Mammary epithelial cell (primary cell): ENCODE measurements at regions of chr17 and their contacts with region 1.

Region 1: DNA sequence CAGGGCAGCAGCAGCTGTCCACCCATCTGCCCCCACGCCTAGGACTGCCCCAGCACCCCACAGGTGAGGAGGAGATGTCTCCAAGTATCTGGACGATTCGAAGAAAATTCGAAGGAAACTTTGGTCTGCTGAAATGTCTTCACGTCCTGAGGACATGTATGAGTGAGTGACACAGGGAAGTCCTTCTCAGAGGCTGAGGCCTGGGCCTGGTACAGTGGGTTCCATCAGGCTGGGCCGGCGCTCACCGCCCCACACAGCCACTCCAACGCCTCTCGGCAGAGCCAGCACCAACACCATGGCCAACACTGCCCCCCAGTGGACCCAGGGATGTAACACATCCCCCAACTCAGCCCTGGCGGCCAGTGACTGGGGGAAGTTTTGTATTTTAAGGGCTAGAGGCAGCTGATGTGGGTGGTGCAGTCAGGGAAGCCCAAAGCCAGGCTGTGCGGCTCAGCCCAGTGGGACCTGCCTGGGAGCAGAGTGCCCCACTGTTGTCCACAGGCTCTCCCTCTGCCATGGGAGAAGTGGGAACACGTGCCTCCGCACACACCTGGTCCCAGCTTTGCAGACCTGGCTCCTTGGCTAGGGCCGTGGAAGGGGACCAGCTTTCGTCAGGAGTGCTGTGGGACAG is 55.8 kb upstream of the FASN start:
- DNase-seq: peak; percentile 64
- H3K4me3 ChIP-seq: no peak overlapping the region
- H3K27ac ChIP-seq: no peak overlapping the region
- H3K4me1 ChIP-seq: no peaks in the 10 kb centered on the region
- H3K27me3 ChIP-seq: no peaks in the 10 kb centered on the region
- CTCF ChIP-seq: peak; percentile 86 to 93

Region 2: GRCh38 chr17:81911277-81911961 is 242.4 kb before region 1 on chr17 and contains the start of gene PCYT2:
- CTCF ChIA-PET with region 1: no interaction called
- dilution Hi-C with region 1: no loop called
- in situ Hi-C with region 1: no loop called
- intact Hi-C with region 1: no loop called
- DNase-seq: peak; percentile 85
- H3K4me3 ChIP-seq: peak within 1 kb of the TSS; percentile 81 to 92 (median 83)
- H3K27ac ChIP-seq: peak within 1 kb of the TSS; percentile 19
- H3K4me1 ChIP-seq: peaks cover 12% of the 10 kb centered on the region
- H3K27me3 ChIP-seq: no peaks in the 10 kb centered on the region
- CTCF ChIP-seq: peak in 1 of 2 donors; percentile 2
- total RNA-seq, gene PCYT2: 23.5 to 48.7 TPM

Region 3: DNA sequence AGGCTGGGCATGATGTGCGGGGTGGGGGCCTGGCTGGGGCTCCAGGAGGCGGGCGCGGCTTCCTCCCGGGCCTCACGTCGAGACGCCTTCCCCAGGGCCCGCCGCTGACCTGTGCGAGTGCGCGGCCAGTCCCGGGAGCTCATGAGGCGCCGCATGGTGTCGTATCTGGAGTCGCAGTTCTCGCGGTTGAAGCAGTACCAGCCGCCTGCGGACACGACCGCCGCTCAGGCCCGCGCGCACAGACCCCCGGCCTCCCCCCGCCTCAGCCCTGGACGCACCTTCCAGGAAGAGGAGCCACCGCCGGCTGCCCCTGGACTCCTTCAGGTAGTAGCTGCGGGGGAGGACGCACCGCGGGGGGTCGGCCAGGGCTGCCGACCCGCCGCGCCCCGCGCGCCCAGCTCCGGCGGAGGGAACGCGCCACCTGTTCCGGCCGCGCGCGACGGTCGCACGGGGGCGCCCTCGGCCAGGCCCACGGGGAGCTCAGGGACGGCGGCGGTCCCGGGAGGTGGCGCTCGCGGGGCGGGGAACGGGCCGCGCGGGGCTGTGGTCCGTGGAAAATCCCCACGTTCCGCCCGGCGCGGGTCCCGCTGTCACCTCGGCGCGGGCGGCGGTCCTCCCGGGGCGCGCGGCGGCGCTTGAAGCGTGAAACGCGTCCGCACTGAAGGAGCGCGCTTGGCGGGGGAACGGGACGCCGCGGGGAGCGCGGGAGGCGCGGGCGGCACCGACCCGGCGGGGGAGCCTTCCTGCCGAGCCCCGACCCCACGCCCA is 194.3 kb before region 1 on chr17:
- CTCF ChIA-PET with region 1: no interaction called
- dilution Hi-C with region 1: no loop called
- in situ Hi-C with region 1: no loop called
- intact Hi-C with region 1: loop called (anchors 2 kb)
- DNase-seq: peak; percentile 33
- H3K4me3 ChIP-seq: no peak overlapping the region
- H3K27ac ChIP-seq: no peak overlapping the region
- H3K4me1 ChIP-seq: peaks cover 13% of the 10 kb centered on the region
- H3K27me3 ChIP-seq: peaks cover 26% of the 10 kb centered on the region
- CTCF ChIP-seq: peak; percentile 51 to 65

Region 4: DNA sequence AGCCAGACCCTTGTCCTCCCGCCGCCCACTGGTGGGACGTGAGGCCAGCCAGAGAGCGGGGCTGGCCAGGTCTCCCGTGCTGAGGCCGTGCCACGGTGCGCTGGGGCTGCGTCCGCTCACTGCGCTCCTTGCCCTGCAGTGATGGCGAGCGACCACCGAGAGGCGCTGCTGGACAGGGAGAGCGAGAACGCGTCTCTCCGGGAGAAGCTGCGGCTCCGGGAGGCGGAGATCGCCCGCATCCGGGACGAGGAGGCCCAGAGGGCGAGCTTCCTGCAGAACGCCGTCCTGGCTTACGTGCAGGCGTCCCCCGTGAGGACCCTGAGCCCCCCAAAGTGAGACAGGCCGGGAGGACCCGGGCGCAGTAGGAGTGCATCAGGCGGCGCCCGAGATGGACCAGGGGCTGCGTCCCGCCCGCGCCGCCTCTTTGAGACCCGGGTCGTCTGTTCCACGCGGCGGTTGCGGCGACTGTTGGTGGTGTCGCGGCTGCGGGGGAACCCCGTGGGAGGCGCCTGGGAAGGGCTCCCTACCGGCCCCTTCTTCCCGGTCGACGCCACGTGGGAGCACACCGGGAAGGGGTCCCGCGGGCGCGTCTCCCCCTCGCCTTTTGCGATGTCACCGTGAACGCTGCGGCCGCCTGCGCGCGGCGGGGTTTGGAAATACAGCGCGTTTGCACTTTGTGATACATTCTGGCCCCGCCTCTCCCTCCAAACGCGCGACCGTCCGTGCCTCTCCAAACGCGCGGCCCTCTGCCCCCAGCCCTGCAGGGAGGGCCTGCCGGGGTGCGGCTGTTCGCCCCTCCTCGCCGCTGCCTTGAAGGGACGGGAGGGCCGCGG is 123.2 kb before region 1 on chr17:
- CTCF ChIA-PET with region 1: no interaction called
- dilution Hi-C with region 1: no loop called
- in situ Hi-C with region 1: loop called (anchors 5 to 25 kb)
- intact Hi-C with region 1: loop called (anchors 1 kb)
- DNase-seq: peak; percentile 58
- H3K4me3 ChIP-seq: peak overlapping the region; percentile 35 to 58 (median 42)
- H3K27ac ChIP-seq: no peak overlapping the region
- H3K4me1 ChIP-seq: peaks cover 18% of the 10 kb centered on the region
- H3K27me3 ChIP-seq: no peaks in the 10 kb centered on the region
- CTCF ChIP-seq: peak; percentile 78 to 80

Region 5: DNA sequence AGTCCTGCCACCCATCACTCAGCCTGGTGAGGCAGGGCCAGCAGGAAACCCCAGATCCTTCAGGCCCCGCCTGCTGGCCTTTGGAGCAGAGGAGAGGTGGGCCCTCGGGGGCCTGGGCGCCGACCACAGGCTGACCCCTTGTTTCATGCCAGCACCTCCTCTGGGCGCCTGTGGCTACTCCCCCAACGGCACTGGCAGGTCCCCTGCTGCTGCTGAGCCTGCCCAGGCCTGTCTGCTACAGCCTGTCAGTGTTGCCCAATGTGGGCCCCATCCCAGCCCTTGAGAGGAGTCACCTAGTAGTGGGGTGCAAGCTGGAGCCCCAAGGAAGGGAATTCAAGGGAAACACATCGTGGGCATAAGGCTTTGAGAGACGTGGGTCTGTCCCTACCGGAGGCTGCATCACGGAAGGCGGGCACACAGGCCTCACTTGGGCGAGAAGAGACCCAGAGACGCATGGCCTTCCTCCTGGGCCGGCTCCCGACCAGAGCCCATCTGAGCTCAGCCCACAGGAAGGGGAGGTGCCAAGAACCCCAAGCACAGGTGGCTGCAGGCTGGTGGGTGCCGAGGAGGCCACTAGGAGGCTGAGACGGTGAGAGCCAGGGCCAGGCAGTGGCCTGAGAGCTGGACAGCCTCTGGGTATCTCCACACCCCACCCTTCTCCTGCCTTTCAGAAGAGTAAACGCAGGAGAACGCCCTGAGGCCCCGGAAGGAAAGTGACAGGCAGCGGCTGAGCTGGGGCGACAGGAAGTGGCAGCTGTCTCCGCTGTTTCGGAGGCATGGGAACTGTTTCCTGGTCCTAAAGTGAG is 47.8 kb before region 1 on chr17:
- CTCF ChIA-PET with region 1: no interaction called
- dilution Hi-C with region 1: no loop called
- in situ Hi-C with region 1: no loop called
- intact Hi-C with region 1: loop called (anchors 1 kb)
- DNase-seq: peak; percentile 81
- H3K4me3 ChIP-seq: peak overlapping the region in 2 of 3 experiments; percentile 7 to 9
- H3K27ac ChIP-seq: no peak overlapping the region
- H3K4me1 ChIP-seq: peaks cover 28% of the 10 kb centered on the region
- H3K27me3 ChIP-seq: no peaks in the 10 kb centered on the region
- CTCF ChIP-seq: peak in 1 of 2 donors; percentile 45